CD4-positive, alpha-beta T cell (primary cell): ENCODE measurements at regions of chr9 and their contacts with region 1.

Region 1: DNA sequence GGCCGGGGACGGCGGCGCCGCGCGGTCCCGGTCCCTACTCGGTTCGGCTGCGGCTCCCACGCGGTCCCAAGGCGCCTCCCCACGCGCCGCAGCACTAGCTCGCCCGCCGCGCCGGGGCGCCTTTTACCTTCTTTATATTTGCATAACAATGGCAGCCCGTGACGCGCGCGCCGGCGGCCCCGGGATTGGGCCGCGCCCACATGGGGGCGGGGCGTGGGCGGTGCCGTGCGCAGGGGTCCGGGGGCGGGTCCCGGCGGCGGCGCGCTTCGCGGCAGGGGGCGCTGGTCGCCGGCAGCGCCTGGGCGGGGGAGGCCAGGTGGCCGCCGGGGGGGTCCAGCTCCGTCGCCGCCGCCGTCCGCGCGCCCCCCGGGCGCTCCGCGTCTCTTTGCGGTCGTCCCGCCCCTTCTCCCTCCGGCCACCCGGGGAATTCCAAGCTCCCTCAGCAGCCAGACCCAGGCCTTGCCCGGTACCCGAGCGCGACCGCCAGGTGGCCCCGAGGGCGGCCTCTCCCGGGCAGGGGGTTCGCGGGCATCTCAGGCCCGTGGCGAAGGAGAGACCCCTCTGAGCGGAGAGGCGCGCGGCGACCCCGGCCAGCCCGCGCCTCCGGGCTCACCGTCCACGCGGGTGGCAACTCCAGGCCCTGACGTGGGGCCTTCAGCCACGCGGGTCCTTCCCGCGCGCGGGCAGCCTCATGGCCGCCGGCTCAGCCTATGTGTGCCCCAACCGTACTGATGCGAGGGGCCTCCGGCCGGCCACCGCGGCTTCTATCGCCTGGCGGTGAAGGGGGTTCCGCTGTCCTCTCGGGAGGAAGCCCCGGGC is at the start of gene NRARP:
- DNase-seq: peak; percentile 85 to 96 (median 92)
- ATAC-seq: peak; percentile 88
- H3K4me3 ChIP-seq: peak within 1 kb of the TSS; percentile 51
- H3K4me3 Mint-ChIP-seq: peak within 1 kb of the TSS; percentile 48
- H3K27ac ChIP-seq: no peak within 1 kb of the TSS
- H3K27ac Mint-ChIP-seq: no peak within 1 kb of the TSS
- H3K4me1 ChIP-seq: peaks cover 49% of the 10 kb centered on the region
- H3K4me1 Mint-ChIP-seq: peaks cover 11% of the 10 kb centered on the region
- H3K27me3 ChIP-seq: peaks cover 28 to 36% of the 10 kb centered on the region in 2 experiments
- H3K27me3 Mint-ChIP-seq: peaks cover 10% of the 10 kb centered on the region
- CTCF ChIP-seq: peak; percentile 60
- total RNA-seq, gene NRARP: 0.96 to 1.4 TPM

Region 2: GRCh38 chr9:135463140-135463539 is 1839.2 kb before region 1 on chr9:
- CTCF ChIA-PET with region 1: no interaction called
- POLR2A ChIA-PET with region 1: no interaction called
- intact Hi-C with region 1: no loop called
- DNase-seq: no peak
- ATAC-seq: no peak
- H3K4me3 ChIP-seq: no peak overlapping the region
- H3K4me3 Mint-ChIP-seq: no peak overlapping the region
- H3K27ac ChIP-seq: no peak overlapping the region
- H3K27ac Mint-ChIP-seq: no peak overlapping the region
- H3K4me1 ChIP-seq: peaks cover 2% of the 10 kb centered on the region
- H3K4me1 Mint-ChIP-seq: no peaks in the 10 kb centered on the region
- H3K27me3 ChIP-seq: peaks cover 0 to 2% of the 10 kb centered on the region in 2 experiments
- H3K27me3 Mint-ChIP-seq: peaks cover 50% of the 10 kb centered on the region
- CTCF ChIP-seq: no peak

Region 3: GRCh38 chr9:137387114-137387890 is 84.9 kb after region 1 on chr9:
- CTCF ChIA-PET with region 1: no interaction called
- POLR2A ChIA-PET with region 1: interaction called, 11 read pairs
- intact Hi-C with region 1: no loop called
- DNase-seq: peak in 13 of 14 experiments; percentile 23 to 77 (median 60)
- ATAC-seq: peak; percentile 95
- H3K4me3 ChIP-seq: peak overlapping the region; percentile 26
- H3K4me3 Mint-ChIP-seq: peak overlapping the region; percentile 69
- H3K27ac ChIP-seq: peak overlapping the region; percentile 55 to 69
- H3K27ac Mint-ChIP-seq: peak overlapping the region; percentile 96
- H3K4me1 ChIP-seq: peaks cover 22% of the 10 kb centered on the region
- H3K4me1 Mint-ChIP-seq: peaks cover 13% of the 10 kb centered on the region
- H3K27me3 ChIP-seq: no peaks in the 10 kb centered on the region
- H3K27me3 Mint-ChIP-seq: no peaks in the 10 kb centered on the region
- CTCF ChIP-seq: no peak

Region 4: DNA sequence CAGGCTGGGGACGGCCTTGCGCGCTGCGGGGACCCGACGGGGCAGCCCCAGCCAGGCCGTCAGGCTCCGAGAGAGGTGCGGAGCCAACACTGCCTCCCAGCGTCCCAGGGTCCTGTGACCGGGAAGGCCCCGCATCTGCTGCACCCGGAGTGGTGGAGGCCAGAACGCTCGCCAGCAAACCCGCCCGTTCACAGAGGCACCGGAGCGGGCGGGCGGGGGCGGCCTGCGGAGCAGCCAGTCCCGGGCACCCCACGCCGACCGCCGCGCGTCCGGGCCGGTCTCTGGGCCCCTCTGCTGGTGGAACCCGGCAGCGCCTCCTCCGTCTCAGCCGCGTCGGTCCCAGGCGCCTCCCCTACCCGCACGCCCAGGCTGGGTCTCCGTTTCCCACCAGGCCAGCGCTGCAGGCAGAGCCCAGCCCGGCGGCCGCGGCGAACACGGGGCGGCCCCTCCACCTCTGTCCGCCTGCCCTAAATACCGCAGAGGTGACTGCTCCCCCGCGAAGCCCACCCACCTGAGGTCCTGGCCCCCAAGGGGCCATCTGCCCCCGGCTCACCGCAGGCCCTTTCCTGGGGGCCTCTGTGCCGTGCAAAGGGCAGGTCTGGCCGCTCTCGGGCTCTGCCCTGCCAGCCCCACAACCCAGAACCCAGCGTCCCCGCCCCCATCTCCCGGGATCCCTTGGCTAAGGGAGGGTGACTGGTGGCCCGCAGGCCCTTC is 104.6 kb after region 1 on chr9:
- CTCF ChIA-PET with region 1: interaction called, 5 read pairs
- POLR2A ChIA-PET with region 1: interaction called, 4 read pairs
- intact Hi-C with region 1: loop called in 1 of 2 experiments (anchors 2 kb)
- DNase-seq: peak; percentile 42 to 82 (median 68)
- ATAC-seq: peak; percentile 99
- H3K4me3 ChIP-seq: no peak overlapping the region
- H3K4me3 Mint-ChIP-seq: no peak overlapping the region
- H3K27ac ChIP-seq: no peak overlapping the region
- H3K27ac Mint-ChIP-seq: no peak overlapping the region
- H3K4me1 ChIP-seq: peaks cover 29% of the 10 kb centered on the region
- H3K4me1 Mint-ChIP-seq: no peaks in the 10 kb centered on the region
- H3K27me3 ChIP-seq: peaks cover 0 to 10% of the 10 kb centered on the region in 2 experiments
- H3K27me3 Mint-ChIP-seq: peaks cover 5% of the 10 kb centered on the region
- CTCF ChIP-seq: peak; percentile 65

Region 5: GRCh38 chr9:137459147-137459600 is 156.8 kb after region 1 on chr9 and contains the start of gene NSMF:
- CTCF ChIA-PET with region 1: no interaction called
- POLR2A ChIA-PET with region 1: no interaction called
- intact Hi-C with region 1: loop called in 1 of 2 experiments (anchors 5 kb)
- DNase-seq: peak; percentile 88 to 98 (median 94)
- ATAC-seq: peak; percentile 67
- H3K4me3 ChIP-seq: peak within 1 kb of the TSS; percentile 57
- H3K4me3 Mint-ChIP-seq: peak within 1 kb of the TSS; percentile 77
- H3K27ac ChIP-seq: peak within 1 kb of the TSS; percentile 77 to 79
- H3K27ac Mint-ChIP-seq: peak within 1 kb of the TSS; percentile 95
- H3K4me1 ChIP-seq: peaks cover 86% of the 10 kb centered on the region
- H3K4me1 Mint-ChIP-seq: peaks cover 46% of the 10 kb centered on the region
- H3K27me3 ChIP-seq: no peaks in the 10 kb centered on the region
- H3K27me3 Mint-ChIP-seq: no peaks in the 10 kb centered on the region
- CTCF ChIP-seq: no peak
- total RNA-seq, gene NSMF: 104 to 109 TPM

Region 6: DNA sequence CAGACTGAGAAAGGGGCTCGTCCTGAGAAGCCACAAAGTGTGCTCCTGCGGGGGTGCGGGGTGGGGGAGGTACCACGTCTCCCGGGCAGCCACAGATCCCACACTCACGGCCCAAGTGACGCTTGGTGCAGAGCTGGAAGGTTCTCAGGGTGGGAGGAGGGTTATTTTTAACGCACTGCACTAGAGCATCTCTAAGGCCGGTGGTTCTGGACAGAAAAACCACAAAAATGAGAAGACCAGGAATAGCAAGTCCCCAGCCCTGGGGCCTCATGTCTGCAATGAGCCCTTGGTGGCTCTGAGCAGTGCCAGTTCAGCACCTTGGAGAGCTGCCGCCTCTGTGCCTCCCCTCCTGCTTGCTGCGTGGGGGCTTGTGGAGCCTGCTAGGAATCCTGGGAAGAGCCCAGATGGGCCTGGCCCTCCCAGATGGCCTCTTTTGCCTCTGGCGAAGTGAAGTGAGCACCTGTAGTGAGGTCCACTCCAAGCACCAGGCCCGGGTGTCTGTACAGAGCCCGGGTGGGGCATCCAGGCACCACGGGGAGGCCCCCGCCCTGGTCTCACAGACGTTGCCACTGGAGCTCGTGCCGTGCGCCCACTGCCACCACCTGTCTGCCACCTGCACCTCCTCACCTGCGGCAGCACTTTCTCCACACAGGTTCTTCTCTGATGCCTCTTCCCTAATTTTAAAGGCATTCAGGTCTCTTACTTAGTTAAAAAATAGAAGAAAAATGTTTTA is 526.3 kb after region 1 on chr9:
- CTCF ChIA-PET with region 1: no interaction called
- POLR2A ChIA-PET with region 1: no interaction called
- intact Hi-C with region 1: no loop called
- DNase-seq: peak in 4 of 14 experiments; percentile 9 to 23 (median 14)
- ATAC-seq: no peak
- H3K4me3 ChIP-seq: no peak overlapping the region
- H3K4me3 Mint-ChIP-seq: no peak overlapping the region
- H3K27ac ChIP-seq: no peak overlapping the region
- H3K27ac Mint-ChIP-seq: no peak overlapping the region
- H3K4me1 ChIP-seq: no peaks in the 10 kb centered on the region
- H3K4me1 Mint-ChIP-seq: peaks cover 4% of the 10 kb centered on the region
- H3K27me3 ChIP-seq: no peaks in the 10 kb centered on the region
- H3K27me3 Mint-ChIP-seq: no peaks in the 10 kb centered on the region
- CTCF ChIP-seq: no peak

Region 7: DNA sequence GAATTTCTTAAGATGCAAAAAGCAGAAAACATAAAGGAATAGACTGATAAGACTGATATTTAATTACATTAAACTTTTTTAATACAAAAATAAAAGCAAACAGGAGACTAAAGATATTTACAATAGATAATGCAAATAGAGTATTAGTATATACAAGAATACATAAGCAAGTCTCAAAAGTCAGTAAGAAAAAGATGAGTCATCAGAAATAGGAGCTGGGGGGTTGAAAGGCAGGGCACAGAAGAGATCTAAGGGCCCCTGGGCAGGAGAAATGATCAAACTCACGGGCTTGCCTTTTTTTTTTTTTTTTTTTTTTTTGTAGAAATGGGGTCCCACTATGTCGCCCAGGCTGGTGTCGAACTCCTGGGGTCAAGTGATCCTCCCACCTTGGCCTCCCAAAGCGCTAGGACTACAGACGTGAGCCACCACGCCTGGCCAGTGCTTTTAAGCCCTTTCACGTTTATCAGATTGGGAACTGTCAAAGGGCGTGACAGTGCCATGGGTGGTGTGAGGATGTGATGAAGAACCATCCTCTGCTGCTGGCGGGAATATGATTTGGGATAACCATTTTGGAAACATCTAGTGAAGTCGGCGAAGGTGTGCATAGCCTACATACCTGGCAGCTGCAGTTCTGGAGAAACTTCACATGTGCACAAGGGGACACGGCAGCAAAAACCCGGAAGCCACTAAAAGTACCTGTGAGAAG is 701.3 kb after region 1 on chr9:
- CTCF ChIA-PET with region 1: no interaction called
- POLR2A ChIA-PET with region 1: no interaction called
- intact Hi-C with region 1: no loop called
- DNase-seq: no peak
- ATAC-seq: no peak
- H3K4me3 ChIP-seq: no peak overlapping the region
- H3K4me3 Mint-ChIP-seq: no peak overlapping the region
- H3K27ac ChIP-seq: no peak overlapping the region
- H3K27ac Mint-ChIP-seq: no peak overlapping the region
- H3K4me1 ChIP-seq: no peaks in the 10 kb centered on the region
- H3K4me1 Mint-ChIP-seq: no peaks in the 10 kb centered on the region
- H3K27me3 ChIP-seq: peaks cover 0 to 3% of the 10 kb centered on the region in 2 experiments
- H3K27me3 Mint-ChIP-seq: peaks cover 9% of the 10 kb centered on the region
- CTCF ChIP-seq: no peak